ENCODE measurements at regions of chrX and their contacts with region 1.

Region 1: DNA sequence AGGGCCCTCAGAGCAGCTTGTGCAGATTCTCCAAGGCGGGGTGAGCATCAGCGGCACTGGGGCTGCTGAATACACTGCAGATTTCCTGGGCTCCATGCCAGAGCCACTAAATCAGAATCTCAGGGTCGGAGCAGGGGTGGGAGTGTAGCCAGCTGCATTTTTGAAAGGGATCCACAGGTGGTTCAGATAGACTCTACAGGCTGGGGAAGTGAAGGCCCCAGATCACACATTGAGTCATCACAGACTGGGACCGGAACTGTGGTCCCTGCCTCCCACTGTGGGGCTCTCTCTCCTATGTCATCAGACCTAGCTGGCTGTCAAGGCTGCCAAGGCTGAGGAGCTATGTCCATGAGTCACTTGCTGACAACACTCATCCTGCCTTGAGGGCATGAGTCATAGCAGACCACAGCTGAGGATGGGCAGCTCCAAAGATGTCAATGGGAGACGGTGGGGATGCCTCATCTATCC is 162.3 kb upstream of the MAMLD1 start:
- DNase-seq: peak; percentile 100
- H3K4me3 Mint-ChIP-seq: no peak overlapping the region
- H3K27ac Mint-ChIP-seq: peak overlapping the region; percentile 51
- H3K4me1 Mint-ChIP-seq: peaks cover 55% of the 10 kb centered on the region
- H3K27me3 Mint-ChIP-seq: no peaks in the 10 kb centered on the region
- CTCF ChIP-seq: no peak

Region 2: GRCh38 chrX:150036181-150037040 is 164.4 kb before region 1 on chrX:
- CTCF ChIA-PET with region 1: no interaction called
- POLR2A ChIA-PET with region 1: interaction called, 4 read pairs
- intact Hi-C with region 1: loop called (anchors 5 kb)
- DNase-seq: peak; percentile 84
- H3K4me3 Mint-ChIP-seq: no peak overlapping the region
- H3K27ac Mint-ChIP-seq: no peak overlapping the region
- H3K4me1 Mint-ChIP-seq: peaks cover 33% of the 10 kb centered on the region
- H3K27me3 Mint-ChIP-seq: no peaks in the 10 kb centered on the region
- CTCF ChIP-seq: no peak

Region 3: DNA sequence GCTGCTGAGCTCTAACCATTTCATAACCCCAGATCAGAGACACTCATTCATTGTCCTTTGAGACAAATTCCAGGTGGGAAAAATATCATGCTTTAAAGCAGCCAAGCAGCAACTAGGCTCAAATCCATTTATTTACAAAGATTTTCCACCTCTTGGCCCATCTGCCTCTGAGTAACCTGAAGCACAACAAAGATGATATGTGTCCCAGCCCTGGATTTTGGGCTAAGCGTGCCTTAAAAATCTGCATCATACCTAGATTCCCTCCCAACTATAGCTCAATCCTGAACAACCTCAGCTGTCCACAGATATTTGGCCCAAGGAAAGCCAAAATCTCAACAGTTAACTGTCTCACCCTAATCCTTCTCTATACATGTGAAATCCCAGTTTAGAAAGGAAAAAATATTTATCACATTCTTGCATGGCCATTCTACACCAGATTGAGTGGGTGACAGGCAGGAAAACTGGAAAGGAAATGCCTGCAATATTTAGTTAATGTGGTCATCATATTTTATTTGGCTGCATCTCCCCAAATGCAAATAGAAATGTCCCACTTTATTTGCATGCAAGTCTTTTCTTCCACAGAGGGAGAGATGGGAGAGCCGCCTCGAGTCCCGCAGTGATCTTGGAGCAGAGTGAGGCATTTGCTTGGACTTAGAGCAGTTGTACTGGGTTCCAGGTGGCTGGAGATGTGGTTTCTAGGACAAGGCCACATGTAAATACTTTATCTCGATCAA is 116.2 kb before region 1 on chrX:
- CTCF ChIA-PET with region 1: no interaction called
- POLR2A ChIA-PET with region 1: no interaction called
- intact Hi-C with region 1: loop called (anchors 5 kb)
- DNase-seq: peak; percentile 65
- H3K4me3 Mint-ChIP-seq: no peak overlapping the region
- H3K27ac Mint-ChIP-seq: no peak overlapping the region
- H3K4me1 Mint-ChIP-seq: peaks cover 33% of the 10 kb centered on the region
- H3K27me3 Mint-ChIP-seq: no peaks in the 10 kb centered on the region
- CTCF ChIP-seq: no peak

Region 4: GRCh38 chrX:150486011-150486410 is 285.2 kb after region 1 on chrX:
- CTCF ChIA-PET with region 1: interaction called, 5 read pairs
- POLR2A ChIA-PET with region 1: no interaction called
- intact Hi-C with region 1: loop called (anchors 5 kb)
- DNase-seq: peak; percentile 71
- H3K4me3 Mint-ChIP-seq: no peak overlapping the region
- H3K27ac Mint-ChIP-seq: no peak overlapping the region
- H3K4me1 Mint-ChIP-seq: peaks cover 21% of the 10 kb centered on the region
- H3K27me3 Mint-ChIP-seq: no peaks in the 10 kb centered on the region
- CTCF ChIP-seq: peak; percentile 62